ENCODE measurements at regions of chr15 and their contacts with region 1.

Region 1: GRCh38 chr15:36658312-36658711 is 78.9 kb downstream of the CDIN1 start:
- DNase-seq: peak; percentile 88
- ATAC-seq: peak; percentile 92
- H3K4me3 ChIP-seq: no peak overlapping the region
- H3K27ac ChIP-seq: 0 out of 2 replicates have a peak overlapping the region, but pooled peaks have one; percentile 13
- H3K4me1 ChIP-seq: peaks cover 18% of the 10 kb centered on the region
- H3K27me3 ChIP-seq: no peaks in the 10 kb centered on the region
- CTCF ChIP-seq: no peak

Region 2: GRCh38 chr15:36401586-36401966 is 256.7 kb before region 1 on chr15:
- CTCF ChIA-PET with region 1: no interaction called
- POLR2A ChIA-PET with region 1: interaction called, 12 read pairs
- intact Hi-C with region 1: no loop called
- DNase-seq: no peak
- ATAC-seq: no peak
- H3K4me3 ChIP-seq: no peak overlapping the region
- H3K27ac ChIP-seq: no peak overlapping the region
- H3K4me1 ChIP-seq: no peaks in the 10 kb centered on the region
- H3K27me3 ChIP-seq: no peaks in the 10 kb centered on the region
- CTCF ChIP-seq: no peak

Region 3: GRCh38 chr15:36579792-36580431 is 78.4 kb before region 1 on chr15:
- CTCF ChIA-PET with region 1: no interaction called
- POLR2A ChIA-PET with region 1: no interaction called
- intact Hi-C with region 1: no loop called
- DNase-seq: peak; percentile 18
- ATAC-seq: peak; percentile 54
- H3K4me3 ChIP-seq: peak overlapping the region; percentile 69
- H3K27ac ChIP-seq: peak overlapping the region; percentile 38; the same call in 1 of the 2 replicates
- H3K4me1 ChIP-seq: peaks cover 32% of the 10 kb centered on the region
- H3K27me3 ChIP-seq: no peaks in the 10 kb centered on the region
- CTCF ChIP-seq: no peak

Region 4: DNA sequence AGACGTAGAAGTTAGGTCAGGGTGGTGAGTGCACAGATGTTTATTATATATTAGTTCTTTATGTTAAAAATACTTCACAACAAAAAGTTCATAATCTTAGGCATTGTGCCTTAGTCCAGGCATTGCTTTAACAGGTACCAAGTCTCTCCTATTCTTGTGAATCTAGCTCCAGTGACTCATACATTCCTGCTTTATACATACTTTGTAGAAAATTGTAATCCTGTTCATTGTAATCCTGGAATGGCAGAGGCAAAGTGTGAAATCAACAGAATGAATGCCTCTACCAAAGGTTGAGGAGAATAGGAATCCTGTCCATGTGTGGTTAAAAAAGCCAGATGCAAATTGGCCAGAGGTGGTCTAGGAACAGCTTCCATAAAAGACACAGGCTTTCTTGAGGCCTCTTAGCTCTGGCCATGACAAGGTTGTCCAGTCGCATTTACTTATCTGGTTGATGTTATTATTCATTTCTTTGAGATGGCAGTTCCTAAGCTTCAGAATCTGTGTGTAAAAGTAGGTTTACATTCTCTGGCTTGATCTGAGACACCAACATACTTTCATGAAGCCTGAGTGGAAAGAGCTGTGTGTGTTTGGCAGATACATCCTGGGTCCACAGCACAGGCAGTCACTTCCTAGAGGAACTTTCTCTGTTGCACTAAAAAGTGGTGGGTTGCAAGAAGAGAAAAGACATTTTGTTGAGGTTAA is 30.1 kb after region 1 on chr15:
- CTCF ChIA-PET with region 1: no interaction called
- POLR2A ChIA-PET with region 1: no interaction called
- intact Hi-C with region 1: loop called (anchors 1 kb)
- DNase-seq: peak; percentile 48
- ATAC-seq: peak; percentile 91
- H3K4me3 ChIP-seq: no peak overlapping the region
- H3K27ac ChIP-seq: no peak overlapping the region
- H3K4me1 ChIP-seq: peaks cover 4% of the 10 kb centered on the region; the same call in 1 of the 2 replicates
- H3K27me3 ChIP-seq: no peaks in the 10 kb centered on the region
- CTCF ChIP-seq: no peak

Region 5: DNA sequence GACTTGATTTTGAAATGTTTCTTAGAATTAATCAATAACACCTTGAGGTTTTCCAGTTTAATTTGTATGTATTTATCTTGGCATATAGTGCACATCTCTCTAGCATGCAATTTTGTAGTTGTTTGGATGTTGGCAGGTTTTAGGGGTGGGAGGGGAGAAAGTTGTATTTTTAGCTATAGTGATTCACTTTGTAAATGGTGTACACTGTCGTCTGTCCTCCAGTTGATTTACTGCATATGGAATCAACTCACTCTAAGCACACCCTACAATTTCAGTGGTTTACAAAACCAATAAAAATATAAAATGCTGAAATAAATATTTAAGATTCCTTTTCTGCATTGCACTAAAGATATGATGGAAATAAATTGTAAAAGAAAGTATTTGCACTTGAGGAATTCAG is 120.2 kb after region 1 on chr15:
- CTCF ChIA-PET with region 1: no interaction called
- POLR2A ChIA-PET with region 1: no interaction called
- intact Hi-C with region 1: loop called (anchors 5 kb)
- DNase-seq: peak; percentile 35
- ATAC-seq: peak; percentile 96
- H3K4me3 ChIP-seq: no peak overlapping the region
- H3K27ac ChIP-seq: no peak overlapping the region
- H3K4me1 ChIP-seq: no peaks in the 10 kb centered on the region; the same call in 1 of the 2 replicates
- H3K27me3 ChIP-seq: no peaks in the 10 kb centered on the region
- CTCF ChIP-seq: no peak

Measured in PC-3 (cell line).